IMR-90 (cell line): ENCODE measurements at regions of chr2 and their contacts with region 1.

Region 1: DNA sequence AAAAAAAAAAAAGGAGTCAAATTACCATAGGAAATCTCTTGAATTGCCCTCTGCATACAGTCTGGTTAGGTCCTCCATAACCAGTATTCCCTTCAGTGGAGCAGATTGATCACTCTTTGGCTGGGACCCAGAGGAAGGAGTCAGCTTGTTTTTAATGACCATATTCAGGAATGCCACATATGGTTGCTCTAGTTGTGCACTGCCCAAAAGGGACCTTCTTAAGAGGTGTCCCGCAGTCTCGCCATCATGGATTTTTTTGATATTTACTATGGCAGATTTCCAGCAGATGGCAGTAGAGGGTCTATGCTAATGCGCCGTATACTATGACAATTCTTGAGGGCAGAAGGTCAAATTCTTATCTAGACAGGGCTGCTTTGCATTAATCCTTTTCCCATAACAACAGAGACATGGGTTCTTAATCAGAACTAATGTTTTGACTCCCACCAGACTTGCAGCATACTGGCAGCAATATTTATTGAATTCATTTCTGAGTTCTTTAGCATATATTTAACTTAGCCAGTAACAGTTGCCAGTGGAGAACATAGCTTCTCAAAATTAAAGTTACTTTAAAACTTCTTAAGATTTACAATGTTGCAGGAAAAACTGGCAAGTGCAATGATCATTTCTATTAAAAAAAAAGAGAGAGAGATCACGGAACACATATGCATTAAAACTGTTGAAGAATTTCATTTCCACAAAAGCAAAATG is 31.8 kb upstream of the INPP4A start:
- DNase-seq: peak; percentile 55
- ATAC-seq: peak; percentile 88
- H3K4me3 ChIP-seq: no peak overlapping the region
- H3K27ac ChIP-seq: no peak overlapping the region
- H3K4me1 ChIP-seq: no peaks in the 10 kb centered on the region
- H3K27me3 ChIP-seq: peaks cover 2% of the 10 kb centered on the region
- CTCF ChIP-seq: peak; percentile 66
- POLR2A ChIP-seq: no peak
- RAD21 ChIP-seq: peak; percentile 76

Region 2: DNA sequence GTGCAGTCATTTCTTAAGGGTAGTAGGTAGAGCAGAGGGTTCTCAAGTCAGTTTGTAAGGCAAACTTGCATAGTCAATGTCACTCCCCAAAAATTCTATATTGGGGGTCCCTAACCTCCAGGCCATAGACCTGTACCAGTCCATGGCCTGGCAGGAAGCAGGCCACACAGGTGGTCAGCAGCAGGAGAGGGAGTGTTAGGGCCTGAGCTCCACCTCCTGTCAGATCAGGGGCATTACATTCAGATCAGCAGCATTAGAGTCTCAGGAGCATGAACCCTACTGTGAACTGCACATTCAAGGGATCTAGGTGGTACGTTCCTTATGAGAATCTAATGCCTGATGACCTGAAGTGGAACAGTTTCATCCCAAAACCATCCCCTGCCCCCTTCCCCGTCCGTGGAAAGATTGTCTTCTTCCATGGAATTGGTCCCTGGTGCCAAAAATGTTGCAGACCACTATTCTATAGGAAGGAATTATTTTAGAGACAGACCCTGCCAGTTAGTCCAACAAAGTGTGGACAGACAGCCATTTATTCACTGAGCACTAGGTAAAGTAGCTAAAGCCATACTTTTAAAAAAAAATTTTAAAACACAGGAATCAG is 188.7 kb after region 1 on chr2:
- CTCF ChIA-PET with region 1: no interaction called
- POLR2A ChIA-PET with region 1: no interaction called
- dilution Hi-C with region 1: no loop called
- in situ Hi-C with region 1: loop called (anchors 5 kb)
- intact Hi-C with region 1: loop called (anchors 1 kb)
- DNase-seq: peak; percentile 47
- ATAC-seq: peak; percentile 95
- H3K4me3 ChIP-seq: no peak overlapping the region
- H3K27ac ChIP-seq: no peak overlapping the region
- H3K4me1 ChIP-seq: no peaks in the 10 kb centered on the region; the same call in 1 of the 2 replicates
- H3K27me3 ChIP-seq: no peaks in the 10 kb centered on the region
- CTCF ChIP-seq: peak; percentile 56
- POLR2A ChIP-seq: no peak
- RAD21 ChIP-seq: peak; percentile 76

Region 3: GRCh38 chr2:98608116-98608999 is 195.5 kb after region 1 on chr2 and contains the starts of genes COA5 and UNC50:
- CTCF ChIA-PET with region 1: no interaction called
- POLR2A ChIA-PET with region 1: no interaction called
- dilution Hi-C with region 1: no loop called
- in situ Hi-C with region 1: loop called (anchors 5 kb)
- intact Hi-C with region 1: loop called (anchors 2 kb)
- DNase-seq: peak; percentile 91
- ATAC-seq: peak; percentile 91
- H3K4me3 ChIP-seq: peak within 1 kb of the TSS; percentile 93
- H3K27ac ChIP-seq: peak within 1 kb of the TSS; percentile 96
- H3K4me1 ChIP-seq: peaks cover 12% of the 10 kb centered on the region
- H3K27me3 ChIP-seq: no peaks in the 10 kb centered on the region
- CTCF ChIP-seq: 0 out of 2 replicates have a peak, but pooled peaks have one; percentile 5
- POLR2A ChIP-seq: peak; percentile 95
- RAD21 ChIP-seq: no peak
- total RNA-seq, gene COA5: 8.4 and 16.4 TPM in 2 replicates
- total RNA-seq, gene UNC50: 18.3 and 40.3 TPM in 2 replicates

Region 4: DNA sequence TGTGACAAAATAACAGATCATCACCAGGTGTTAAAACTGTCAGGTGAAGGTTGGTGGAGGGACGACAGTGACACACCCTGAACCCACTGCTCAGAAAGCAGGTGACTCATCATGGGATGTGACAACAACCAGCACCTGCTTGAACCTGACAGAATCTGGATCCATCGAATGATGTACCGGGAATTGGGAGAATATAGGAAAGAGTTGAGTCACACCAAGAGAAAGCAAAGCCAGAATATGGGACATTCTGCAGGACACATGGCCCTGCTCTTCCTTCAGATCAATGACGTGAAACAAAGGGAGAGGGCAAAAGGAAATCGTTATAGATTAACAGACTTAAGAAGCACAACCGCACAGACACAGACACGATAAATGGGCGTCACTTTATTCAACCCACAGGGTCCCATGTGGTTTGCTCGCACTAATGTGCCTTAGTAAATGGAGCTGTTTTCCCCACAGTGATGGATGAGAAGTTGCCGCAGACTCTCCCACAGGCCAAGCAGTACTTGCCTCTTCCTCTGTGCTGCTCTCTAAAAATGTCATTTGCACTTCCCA is 423.0 kb after region 1 on chr2:
- CTCF ChIA-PET with region 1: no interaction called
- POLR2A ChIA-PET with region 1: no interaction called
- dilution Hi-C with region 1: no loop called
- in situ Hi-C with region 1: loop called (anchors 25 kb)
- intact Hi-C with region 1: loop called (anchors 1 kb)
- DNase-seq: no peak
- ATAC-seq: no peak
- H3K4me3 ChIP-seq: no peak overlapping the region
- H3K27ac ChIP-seq: no peak overlapping the region
- H3K4me1 ChIP-seq: no peaks in the 10 kb centered on the region
- H3K27me3 ChIP-seq: peaks cover 16% of the 10 kb centered on the region
- CTCF ChIP-seq: no peak
- POLR2A ChIP-seq: no peak
- RAD21 ChIP-seq: no peak

Region 5: DNA sequence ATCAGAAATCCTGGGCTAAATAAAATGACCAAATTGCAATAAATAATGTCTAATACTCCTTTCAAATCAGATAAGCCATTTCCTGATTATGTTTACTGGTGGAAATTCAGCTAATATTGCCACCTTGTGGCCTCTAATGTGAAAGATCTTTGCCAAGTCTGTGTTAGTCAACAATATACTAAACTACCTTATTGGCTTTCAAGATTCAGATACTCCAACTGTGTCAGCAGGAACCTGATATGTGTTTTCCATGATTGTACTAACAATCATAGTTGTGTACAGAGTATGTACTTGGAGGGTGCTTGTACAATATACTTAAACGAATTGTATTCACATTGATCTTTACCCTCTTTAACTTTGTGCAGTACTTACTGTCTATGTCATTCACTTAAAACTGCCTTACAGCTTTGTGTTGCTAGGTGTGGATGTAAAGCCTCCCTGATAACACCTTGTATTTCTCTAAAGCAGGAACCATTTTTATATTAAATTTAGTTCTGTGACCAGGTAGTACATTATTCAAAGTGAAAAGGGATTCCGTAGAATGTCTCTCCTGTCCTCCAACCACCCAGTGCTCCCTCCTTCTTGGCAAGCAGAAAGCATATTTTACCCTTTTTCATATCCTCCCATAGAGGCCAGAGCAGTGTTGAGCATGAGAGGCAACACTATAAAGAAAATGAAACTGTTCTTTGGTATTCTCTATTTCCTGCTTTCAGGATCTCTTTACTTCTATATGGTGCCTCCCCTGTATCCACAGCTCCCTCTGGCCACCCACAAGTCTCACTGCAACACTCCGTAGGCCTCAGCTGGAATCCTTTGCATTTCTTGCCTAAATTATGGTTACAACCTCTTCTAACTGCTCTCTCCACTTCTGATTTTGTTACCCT is 653.4 kb after region 1 on chr2:
- CTCF ChIA-PET with region 1: no interaction called
- POLR2A ChIA-PET with region 1: no interaction called
- dilution Hi-C with region 1: no loop called
- in situ Hi-C with region 1: no loop called
- intact Hi-C with region 1: loop called (anchors 5 kb)
- DNase-seq: peak; percentile 61
- ATAC-seq: peak; percentile 97
- H3K4me3 ChIP-seq: no peak overlapping the region
- H3K27ac ChIP-seq: no peak overlapping the region
- H3K4me1 ChIP-seq: no peaks in the 10 kb centered on the region
- H3K27me3 ChIP-seq: peaks cover 5% of the 10 kb centered on the region
- CTCF ChIP-seq: peak; percentile 60
- POLR2A ChIP-seq: no peak
- RAD21 ChIP-seq: peak; percentile 48